SK-N-SH (cell line): ENCODE measurements at regions of chr1 and their contacts with region 1.

Region 1: DNA sequence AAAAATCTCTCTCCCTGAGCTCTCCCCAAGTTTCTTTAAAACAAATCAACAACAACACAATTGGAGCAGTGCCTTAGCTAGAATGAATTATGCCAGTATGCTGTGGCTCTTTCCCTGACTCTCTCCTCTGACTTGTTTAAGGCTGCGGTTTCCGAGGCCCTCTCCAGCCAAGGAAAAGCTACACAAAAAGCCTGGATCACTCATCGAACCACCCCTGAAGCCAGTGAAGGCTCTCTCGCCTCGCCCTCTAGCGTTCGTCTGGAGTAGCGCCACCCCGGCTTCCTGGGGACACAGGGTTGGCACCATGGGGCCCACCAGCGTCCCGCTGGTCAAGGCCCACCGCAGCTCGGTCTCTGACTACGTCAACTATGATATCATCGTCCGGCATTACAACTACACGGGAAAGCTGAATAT is 1.9 kb downstream of the S1PR1 start:
- DNase-seq: peak; percentile 86
- H3K4me3 ChIP-seq: no peak overlapping the region; a peak in 1 of 4 replicates
- H3K27ac ChIP-seq: no peak overlapping the region
- H3K4me1 ChIP-seq: peaks cover 0 to 8% of the 10 kb centered on the region in 2 experiments; a peak in 2 of 4 replicates
- H3K27me3 ChIP-seq: no peaks in the 10 kb centered on the region
- CTCF ChIP-seq: peak; percentile 94
- EP300 ChIP-seq: no peak
- RAD21 ChIP-seq: peak; percentile 85

Region 2: DNA sequence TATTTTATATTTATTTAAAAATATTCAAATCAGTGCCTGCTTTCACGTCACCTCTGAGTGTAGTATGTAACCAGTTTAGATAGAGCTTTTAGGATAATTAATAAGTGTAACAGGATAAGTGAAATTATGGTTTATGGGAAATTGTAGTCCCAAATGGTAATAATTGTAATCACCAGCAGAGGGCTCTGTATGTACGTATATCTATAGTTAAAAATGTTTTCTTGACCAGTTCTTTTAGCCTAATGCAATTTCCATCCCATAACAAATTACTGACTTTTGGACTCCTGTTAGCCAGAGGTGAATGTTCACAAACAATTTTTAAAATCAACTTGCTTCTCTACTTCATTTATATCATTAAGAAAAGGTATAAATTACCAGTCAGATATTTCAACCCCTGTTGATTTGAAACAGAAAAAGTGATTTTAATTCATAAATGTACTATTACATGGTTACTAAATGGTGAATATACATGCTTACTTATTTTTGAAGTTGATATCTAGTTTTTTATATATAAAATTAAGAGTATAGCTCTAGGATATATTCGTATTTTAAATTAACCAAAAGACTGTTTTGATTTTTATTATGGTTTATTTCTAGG is 317.5 kb before region 1 on chr1:
- CTCF ChIA-PET with region 1: interaction called, 18 read pairs
- POLR2A ChIA-PET with region 1: no interaction called
- DNase-seq: peak; percentile 44
- H3K4me3 ChIP-seq: no peak overlapping the region
- H3K27ac ChIP-seq: no peak overlapping the region
- H3K4me1 ChIP-seq: peaks cover 0 to 5% of the 10 kb centered on the region in 2 experiments; a peak in 1 of 4 replicates
- H3K27me3 ChIP-seq: no peaks in the 10 kb centered on the region
- CTCF ChIP-seq: peak; percentile 75
- EP300 ChIP-seq: no peak
- RAD21 ChIP-seq: peak; percentile 80

Region 3: DNA sequence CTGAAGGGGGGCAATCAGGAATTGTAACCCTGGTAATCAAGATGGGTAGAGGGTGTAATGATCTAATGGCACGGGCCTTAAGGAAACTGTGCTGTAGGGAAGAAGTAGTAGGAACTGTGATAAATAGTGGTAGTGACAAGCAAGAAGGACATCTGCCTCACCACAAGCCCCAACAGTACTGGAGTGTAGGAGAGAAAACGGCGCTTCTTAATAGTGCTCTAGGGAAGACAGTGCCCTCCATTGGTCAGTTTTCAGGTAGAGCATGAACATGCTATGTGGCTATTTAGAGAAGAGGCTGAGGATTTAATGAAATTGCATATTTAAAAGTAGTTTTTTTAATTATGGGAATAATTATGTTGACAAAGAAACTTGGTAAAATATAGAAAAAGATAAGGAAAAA is 310.6 kb before region 1 on chr1:
- CTCF ChIA-PET with region 1: interaction called, 11 read pairs
- POLR2A ChIA-PET with region 1: no interaction called
- DNase-seq: peak; percentile 1
- H3K4me3 ChIP-seq: no peak overlapping the region
- H3K27ac ChIP-seq: no peak overlapping the region
- H3K4me1 ChIP-seq: no peaks in the 10 kb centered on the region; a peak in 1 of 4 replicates
- H3K27me3 ChIP-seq: no peaks in the 10 kb centered on the region
- CTCF ChIP-seq: peak; percentile 10; the same call in 1 of the 2 replicates
- EP300 ChIP-seq: no peak
- RAD21 ChIP-seq: no peak

Region 4: DNA sequence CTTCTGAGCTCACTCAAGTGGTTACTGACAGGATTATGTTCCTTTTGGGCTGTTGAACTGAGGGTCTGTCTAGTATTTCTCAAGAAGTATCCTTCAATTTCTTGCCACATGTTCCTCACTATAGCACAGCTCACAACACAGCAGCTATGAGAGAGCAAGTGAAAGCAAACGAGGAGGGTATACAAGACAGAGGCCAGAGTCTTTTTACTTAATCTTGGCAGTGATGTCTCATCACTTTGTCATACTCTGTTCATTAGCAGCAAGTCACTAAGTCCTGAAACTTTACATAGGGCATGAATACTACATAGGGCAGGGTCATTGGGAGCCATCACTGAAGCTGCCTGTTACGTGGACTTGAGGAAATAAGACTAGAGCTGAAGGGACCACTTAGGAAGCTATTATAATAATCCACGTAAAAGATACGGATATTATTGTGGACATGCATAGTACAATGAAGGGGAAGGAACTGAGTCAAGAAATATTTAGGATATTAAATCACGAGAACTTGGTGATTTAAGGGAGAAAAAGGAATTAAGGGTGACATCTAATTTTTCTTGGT is 279.1 kb before region 1 on chr1:
- CTCF ChIA-PET with region 1: interaction called, 13 read pairs
- POLR2A ChIA-PET with region 1: no interaction called
- DNase-seq: no peak
- H3K4me3 ChIP-seq: no peak overlapping the region
- H3K27ac ChIP-seq: no peak overlapping the region
- H3K4me1 ChIP-seq: peaks cover 4 to 10% of the 10 kb centered on the region in 2 experiments; a peak in 2 of 4 replicates
- H3K27me3 ChIP-seq: no peaks in the 10 kb centered on the region
- CTCF ChIP-seq: no peak
- EP300 ChIP-seq: no peak
- RAD21 ChIP-seq: no peak